ENCODE measurements at regions of chr1 and their contacts with region 1.

Region 1: DNA sequence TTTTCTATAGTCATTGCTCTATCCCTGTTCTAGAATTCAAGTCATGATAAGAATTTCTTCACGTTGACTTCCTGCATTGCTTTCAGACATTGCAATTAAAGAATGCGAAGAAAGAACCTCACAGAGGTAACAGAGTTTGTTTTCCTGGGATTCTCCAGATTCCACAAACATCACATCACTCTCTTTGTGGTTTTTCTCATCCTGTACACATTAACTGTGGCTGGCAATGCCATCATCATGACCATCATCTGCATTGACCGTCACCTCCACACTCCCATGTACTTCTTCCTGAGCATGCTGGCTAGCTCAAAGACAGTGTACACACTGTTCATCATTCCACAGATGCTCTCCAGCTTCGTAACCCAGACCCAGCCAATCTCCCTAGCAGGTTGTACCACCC is 10.6 kb downstream of the APCS start:
- DNase-seq: peak; percentile 54
- H3K4me3 Mint-ChIP-seq: peak overlapping the region; percentile 25
- H3K27ac Mint-ChIP-seq: peak overlapping the region; percentile 66
- H3K4me1 Mint-ChIP-seq: peaks cover 34% of the 10 kb centered on the region
- H3K27me3 Mint-ChIP-seq: no peaks in the 10 kb centered on the region
- CTCF ChIP-seq: no peak

Region 2: GRCh38 chr1:159554696-159555095 is 43.5 kb before region 1 on chr1:
- CTCF ChIA-PET with region 1: no interaction called
- intact Hi-C with region 1: loop called (anchors 5 kb)
- DNase-seq: no peak
- H3K4me3 Mint-ChIP-seq: no peak overlapping the region
- H3K27ac Mint-ChIP-seq: no peak overlapping the region
- H3K4me1 Mint-ChIP-seq: peaks cover 20% of the 10 kb centered on the region
- H3K27me3 Mint-ChIP-seq: no peaks in the 10 kb centered on the region
- CTCF ChIP-seq: no peak

Region 3: DNA sequence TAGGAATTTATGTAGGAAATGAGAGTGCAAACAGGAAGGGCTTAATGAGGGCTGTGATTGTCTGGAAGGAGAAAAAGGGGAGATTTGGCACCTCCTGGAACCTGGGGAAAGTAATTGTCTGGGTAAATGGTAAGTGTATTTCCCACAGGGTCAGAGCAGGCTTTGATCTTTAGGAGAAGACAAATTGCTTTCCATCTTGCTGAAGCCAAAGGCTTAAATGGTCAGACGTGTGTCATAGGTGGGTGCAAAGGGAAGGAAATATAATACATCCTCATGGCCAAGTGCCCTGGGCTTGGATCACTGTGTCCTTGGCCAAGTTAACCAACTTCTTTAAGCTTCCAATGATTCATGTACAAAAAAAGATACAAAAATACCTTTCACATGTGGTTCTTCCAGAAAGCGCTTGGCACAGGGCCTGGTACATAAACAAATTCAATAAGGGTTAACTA is 181.2 kb after region 1 on chr1:
- CTCF ChIA-PET with region 1: no interaction called
- intact Hi-C with region 1: loop called (anchors 5 kb)
- DNase-seq: no peak
- H3K4me3 Mint-ChIP-seq: no peak overlapping the region
- H3K27ac Mint-ChIP-seq: peak overlapping the region; percentile 12
- H3K4me1 Mint-ChIP-seq: peaks cover 6% of the 10 kb centered on the region
- H3K27me3 Mint-ChIP-seq: peaks cover 21% of the 10 kb centered on the region
- CTCF ChIP-seq: no peak

Measured in Calu3 (cell line).